ENCODE measurements at regions of chr4 and their contacts with region 1.

Region 1: GRCh38 chr4:2745981-2746806 is 9.9 kb downstream of the TNIP2 start:
- DNase-seq: peak; percentile 92
- H3K4me3 Mint-ChIP-seq: peak overlapping the region; percentile 79
- H3K27ac Mint-ChIP-seq: peak overlapping the region; percentile 96
- H3K4me1 Mint-ChIP-seq: peaks cover 60% of the 10 kb centered on the region
- H3K27me3 Mint-ChIP-seq: no peaks in the 10 kb centered on the region

Region 2: GRCh38 chr4:2241410-2242353 is 504.5 kb before region 1 on chr4 and contains the starts of genes HAUS3 and POLN:
- intact Hi-C with region 1: loop called (anchors 1 kb)
- DNase-seq: peak; percentile 100
- H3K4me3 Mint-ChIP-seq: peak within 1 kb of the TSS; percentile 85
- H3K27ac Mint-ChIP-seq: peak within 1 kb of the TSS; percentile 90
- H3K4me1 Mint-ChIP-seq: peaks cover 53% of the 10 kb centered on the region
- H3K27me3 Mint-ChIP-seq: peaks cover 2% of the 10 kb centered on the region
- total RNA-seq, gene HAUS3: 19.2 and 19.9 TPM in 2 replicates
- total RNA-seq, gene POLN: 2.1 and 3.5 TPM in 2 replicates

Region 3: DNA sequence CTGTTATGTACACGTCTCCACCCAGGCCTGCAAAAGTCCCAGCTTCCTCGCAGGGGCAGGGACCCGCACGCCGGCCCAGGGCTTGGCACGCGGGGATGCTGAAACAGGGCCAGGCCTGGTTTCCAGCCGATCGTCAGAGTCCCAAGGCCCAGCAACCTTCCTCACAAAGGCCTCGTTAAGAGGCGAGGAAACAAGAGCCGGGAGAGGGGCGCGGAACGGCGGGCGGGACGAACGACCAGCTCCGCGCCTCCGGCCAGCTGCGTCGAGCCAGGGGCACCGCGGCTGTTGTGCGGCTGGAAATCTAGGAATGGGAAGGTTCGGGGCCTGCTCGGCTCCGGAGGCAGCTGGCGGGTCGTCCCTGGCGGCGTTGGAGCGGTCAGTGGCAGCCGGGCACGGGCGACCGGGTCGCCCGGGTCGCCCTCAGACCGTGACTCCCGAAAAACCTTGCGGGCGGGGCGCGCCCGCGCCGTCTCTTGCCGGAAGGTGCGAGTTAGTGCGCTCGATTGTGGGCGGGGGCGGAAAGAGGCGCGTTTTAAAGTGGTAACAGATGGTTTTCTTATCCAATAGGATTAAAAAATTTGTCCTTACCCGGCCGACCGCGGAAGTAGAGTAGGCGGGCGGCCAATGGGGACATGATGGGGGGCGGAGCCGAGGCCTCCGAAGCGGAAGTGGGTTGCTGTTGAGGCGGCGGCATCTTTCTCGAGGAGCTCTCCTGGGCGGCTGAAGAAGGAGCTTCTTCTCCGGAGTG is 277.6 kb before region 1 on chr4 and contains the start of gene RNF4:
- intact Hi-C with region 1: loop called (anchors 1 kb)
- DNase-seq: peak; percentile 94
- H3K4me3 Mint-ChIP-seq: peak within 1 kb of the TSS; percentile 95
- H3K27ac Mint-ChIP-seq: peak within 1 kb of the TSS; percentile 96
- H3K4me1 Mint-ChIP-seq: peaks cover 29% of the 10 kb centered on the region
- H3K27me3 Mint-ChIP-seq: peaks cover 1% of the 10 kb centered on the region
- total RNA-seq, gene RNF4: 93.7 and 112 TPM in 2 replicates

Region 4: DNA sequence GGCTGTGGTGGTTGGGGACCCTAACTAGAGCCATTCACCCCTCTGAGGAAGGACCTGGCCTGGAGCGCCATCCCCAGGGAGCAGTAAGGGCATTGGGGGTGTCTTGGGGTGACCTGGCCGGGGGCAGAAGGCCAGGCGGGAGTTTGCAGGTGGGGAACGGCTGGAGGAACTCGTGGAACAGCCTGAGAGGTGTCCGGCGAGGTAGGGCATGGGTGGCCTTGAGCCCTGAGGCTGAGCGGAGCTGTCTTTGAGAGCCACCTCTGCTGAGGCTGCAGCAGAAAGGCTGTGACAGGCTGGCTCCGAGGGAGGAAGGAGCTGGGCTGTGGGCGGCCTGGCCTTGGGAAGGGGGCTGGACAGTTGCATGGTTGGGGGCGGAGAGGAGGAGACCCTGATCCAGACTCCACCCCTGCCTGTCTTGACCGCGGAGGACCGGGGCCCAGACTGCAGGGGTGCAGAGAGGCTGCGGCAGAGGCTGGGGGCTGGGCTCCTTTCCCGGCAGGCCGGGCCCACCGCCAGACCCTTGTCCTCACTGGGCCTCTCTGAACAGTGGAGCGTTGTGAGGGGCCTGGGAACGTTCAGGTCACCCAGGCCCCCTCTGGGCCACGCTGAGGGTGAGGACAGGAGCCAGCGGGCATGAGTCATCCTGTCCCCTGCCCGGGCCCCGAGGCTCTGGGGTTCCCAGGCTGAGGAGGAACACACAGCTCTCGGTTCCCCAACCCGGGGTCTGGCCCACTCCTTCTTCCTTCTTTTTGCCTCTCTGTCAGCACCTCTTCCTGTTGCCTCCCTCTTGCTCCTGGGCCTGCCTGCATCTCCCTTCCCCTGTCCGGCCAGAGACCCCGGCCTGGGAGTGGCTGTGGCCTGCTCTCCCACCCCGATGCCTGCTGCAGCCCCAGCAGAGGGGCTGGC is 54.8 kb after region 1 on chr4:
- intact Hi-C with region 1: loop called (anchors 1 kb)
- DNase-seq: no peak
- H3K4me3 Mint-ChIP-seq: peak overlapping the region; percentile 78
- H3K27ac Mint-ChIP-seq: peak overlapping the region; percentile 48
- H3K4me1 Mint-ChIP-seq: peaks cover 36% of the 10 kb centered on the region
- H3K27me3 Mint-ChIP-seq: no peaks in the 10 kb centered on the region

Region 5: DNA sequence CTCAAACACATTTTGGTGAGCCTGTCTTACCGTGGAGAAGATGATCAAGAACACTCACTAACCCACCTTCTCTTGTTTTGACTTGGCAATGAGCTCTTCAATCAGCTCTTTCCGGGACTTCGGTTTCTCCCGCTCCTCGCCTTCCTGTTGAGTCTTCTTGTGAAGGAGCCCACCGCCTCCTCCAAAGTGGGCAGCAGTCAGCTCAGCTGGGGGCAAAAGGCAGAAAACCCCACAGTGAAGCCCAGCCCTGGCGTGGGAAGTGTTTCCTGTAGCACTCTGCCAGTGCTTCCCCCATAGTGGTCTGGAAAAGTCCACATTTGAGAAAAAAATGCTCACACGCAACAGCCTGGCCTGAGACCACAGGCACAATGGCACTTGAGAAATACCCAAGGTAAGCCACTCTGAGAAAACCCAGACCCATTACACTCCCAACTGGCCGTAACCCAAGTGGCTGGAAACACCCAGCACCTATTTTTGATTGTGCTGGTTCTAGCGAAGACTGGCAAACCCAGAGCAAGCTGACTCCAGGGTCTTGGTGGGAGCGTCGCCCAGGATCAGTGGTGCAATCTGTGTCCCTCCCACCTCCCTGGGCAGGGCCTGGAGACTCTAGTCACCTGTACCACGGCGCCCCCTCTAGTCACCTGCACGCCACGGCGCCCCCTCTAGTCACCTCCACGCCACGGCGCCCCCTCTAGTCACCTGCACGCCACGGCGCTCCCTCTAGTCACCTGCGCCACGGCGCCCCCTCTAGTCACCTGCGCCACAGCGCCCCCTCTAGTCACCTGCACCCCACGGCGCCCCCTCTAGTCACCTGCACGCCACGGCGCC is 208.4 kb after region 1 on chr4:
- intact Hi-C with region 1: loop called (anchors 1 kb)
- DNase-seq: peak; percentile 64
- H3K4me3 Mint-ChIP-seq: peak overlapping the region; percentile 80
- H3K27ac Mint-ChIP-seq: peak overlapping the region; percentile 98
- H3K4me1 Mint-ChIP-seq: peaks cover 72% of the 10 kb centered on the region
- H3K27me3 Mint-ChIP-seq: no peaks in the 10 kb centered on the region

Region 6: DNA sequence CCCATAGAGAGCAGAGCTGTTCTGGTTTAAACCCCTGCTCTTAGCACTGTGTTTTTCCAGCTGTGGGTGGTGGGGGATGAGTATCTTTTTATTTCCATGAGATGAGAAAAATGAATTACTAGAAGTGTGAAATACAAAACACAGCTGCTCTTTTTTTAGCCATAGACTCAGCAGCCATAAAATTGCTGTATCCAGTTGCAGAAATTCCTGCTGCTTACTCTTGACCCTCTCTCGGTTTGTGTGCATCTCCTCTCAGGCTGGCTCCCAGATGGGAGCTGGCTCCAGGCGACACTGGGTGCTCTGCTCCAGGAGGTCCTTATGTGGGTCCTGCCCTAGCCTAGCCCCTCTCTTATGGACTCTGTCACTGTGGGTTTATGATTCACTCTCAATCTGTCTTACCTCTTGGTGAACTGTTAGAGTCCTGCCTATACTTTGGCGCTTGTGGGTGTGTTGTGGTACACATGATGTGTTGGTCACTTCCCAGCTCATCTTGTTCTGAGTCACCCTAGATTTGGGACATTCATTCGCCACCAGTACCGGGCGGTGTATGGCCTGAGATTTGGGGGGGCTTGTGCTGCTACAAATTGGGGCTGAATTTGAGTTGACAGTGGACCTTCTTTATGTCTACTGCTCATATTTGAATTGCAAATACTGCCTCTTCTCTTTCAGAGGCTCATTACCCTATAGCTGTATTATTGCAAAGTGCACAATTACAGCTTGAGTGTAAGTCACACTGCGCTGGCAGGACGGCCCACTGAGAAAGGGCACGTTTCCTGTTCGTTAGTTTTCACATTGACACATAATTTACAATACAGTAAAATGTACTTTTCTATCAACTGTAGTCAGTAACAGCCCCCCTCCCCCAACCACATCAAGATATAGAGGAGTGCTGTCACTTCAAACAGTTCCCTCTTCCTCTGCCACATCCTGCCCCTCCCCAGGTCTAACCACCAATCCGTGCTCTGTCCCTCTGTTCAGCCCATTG is 455.8 kb after region 1 on chr4:
- intact Hi-C with region 1: loop called (anchors 2 kb)
- DNase-seq: peak; percentile 74
- H3K4me3 Mint-ChIP-seq: peak overlapping the region; percentile 70
- H3K27ac Mint-ChIP-seq: peak overlapping the region; percentile 94
- H3K4me1 Mint-ChIP-seq: peaks cover 31% of the 10 kb centered on the region
- H3K27me3 Mint-ChIP-seq: no peaks in the 10 kb centered on the region

Measured in activated T-helper 1 cell treated with anti-CD3 and anti-CD28 coated beads, Interleukin-12 subunit alpha, Interleukin-12 subunit beta, Interleukin-2, Interleukin-4 antibody, amounts not matched to agents 30 ng/mL and 10 ng/mL and 1 ng/mL, durations not matched to agents 14 hours and 24 hours and 36 hours (primary cell).